ENCODE measurements at regions of chr12 and their contacts with region 1.

Region 1: DNA sequence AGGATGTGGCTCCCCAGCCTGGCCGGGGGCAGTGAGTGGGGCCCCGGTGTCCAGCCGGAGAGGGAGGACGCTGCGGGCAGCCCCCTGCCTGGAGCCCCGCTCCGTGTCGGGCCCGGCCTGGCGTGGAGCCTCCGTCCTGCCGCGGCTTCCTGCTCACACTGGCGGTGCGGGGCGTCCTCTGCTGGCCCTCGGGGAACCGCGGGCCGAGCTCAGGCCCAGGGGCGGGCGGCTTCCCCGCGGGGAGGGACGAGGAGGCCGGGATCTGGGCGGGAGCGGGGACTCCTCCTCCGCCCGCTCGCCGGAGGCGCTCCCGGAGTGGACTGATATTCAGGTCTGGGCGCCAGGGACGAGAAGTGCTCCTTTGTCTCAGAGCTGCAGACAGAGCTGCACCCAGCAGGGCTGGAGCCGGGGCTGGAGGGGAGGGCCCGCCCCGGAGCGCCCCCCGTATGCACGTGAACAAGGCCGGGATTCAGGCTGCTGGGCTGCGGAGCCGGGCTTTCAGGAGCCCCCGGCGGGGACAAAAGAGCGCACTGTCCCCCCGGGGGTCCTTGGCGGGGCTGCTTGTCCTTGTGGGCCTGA is 2.2 kb downstream of the MMP17 start:
- DNase-seq: peak; percentile 62
- ATAC-seq: peak; percentile 43
- H3K4me3 Mint-ChIP-seq: peak overlapping the region; percentile 65
- H3K27ac Mint-ChIP-seq: no peak overlapping the region
- H3K4me1 Mint-ChIP-seq: peaks cover 31% of the 10 kb centered on the region
- H3K27me3 Mint-ChIP-seq: peaks cover 9% of the 10 kb centered on the region
- CTCF ChIP-seq: no peak

Region 2: DNA sequence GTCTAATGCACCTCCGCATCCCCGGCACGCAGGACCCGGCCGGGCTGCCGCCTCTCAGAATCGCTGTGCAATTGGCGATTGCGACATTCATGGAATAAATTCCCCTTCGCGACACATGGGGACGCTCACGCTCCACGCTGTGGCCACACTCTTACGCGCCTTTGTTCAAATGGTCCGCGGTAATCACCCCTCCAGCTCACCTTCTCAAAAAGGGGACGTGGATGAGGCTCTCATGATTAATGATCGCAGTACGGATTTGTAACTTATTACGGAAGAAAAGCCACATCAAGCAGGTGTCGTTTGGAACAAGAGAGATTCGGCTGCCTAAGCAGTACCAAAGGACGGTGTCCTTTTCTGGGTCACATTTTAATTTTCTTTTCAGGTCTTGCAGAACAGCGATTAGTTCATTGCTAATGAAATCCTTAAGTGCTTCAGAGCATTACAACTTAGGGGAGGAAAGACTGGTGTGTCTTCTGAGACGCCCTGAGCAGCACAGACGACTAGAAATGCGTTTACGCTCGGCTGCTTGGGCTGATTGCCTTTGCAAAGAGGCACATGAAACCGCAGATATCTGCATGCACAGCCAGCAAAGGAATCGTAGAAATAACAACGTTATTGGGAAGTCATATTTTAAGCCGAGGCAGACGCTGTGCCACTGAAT is 914.0 kb before region 1 on chr12:
- CTCF ChIA-PET with region 1: interaction called, 5 read pairs
- POLR2A ChIA-PET with region 1: no interaction called
- intact Hi-C with region 1: loop called (anchors 1 kb)
- DNase-seq: peak; percentile 48
- ATAC-seq: peak; percentile 60
- H3K4me3 Mint-ChIP-seq: peak overlapping the region; percentile 39
- H3K27ac Mint-ChIP-seq: no peak overlapping the region
- H3K4me1 Mint-ChIP-seq: peaks cover 9% of the 10 kb centered on the region
- H3K27me3 Mint-ChIP-seq: peaks cover 35% of the 10 kb centered on the region
- CTCF ChIP-seq: peak; percentile 53

Region 3: DNA sequence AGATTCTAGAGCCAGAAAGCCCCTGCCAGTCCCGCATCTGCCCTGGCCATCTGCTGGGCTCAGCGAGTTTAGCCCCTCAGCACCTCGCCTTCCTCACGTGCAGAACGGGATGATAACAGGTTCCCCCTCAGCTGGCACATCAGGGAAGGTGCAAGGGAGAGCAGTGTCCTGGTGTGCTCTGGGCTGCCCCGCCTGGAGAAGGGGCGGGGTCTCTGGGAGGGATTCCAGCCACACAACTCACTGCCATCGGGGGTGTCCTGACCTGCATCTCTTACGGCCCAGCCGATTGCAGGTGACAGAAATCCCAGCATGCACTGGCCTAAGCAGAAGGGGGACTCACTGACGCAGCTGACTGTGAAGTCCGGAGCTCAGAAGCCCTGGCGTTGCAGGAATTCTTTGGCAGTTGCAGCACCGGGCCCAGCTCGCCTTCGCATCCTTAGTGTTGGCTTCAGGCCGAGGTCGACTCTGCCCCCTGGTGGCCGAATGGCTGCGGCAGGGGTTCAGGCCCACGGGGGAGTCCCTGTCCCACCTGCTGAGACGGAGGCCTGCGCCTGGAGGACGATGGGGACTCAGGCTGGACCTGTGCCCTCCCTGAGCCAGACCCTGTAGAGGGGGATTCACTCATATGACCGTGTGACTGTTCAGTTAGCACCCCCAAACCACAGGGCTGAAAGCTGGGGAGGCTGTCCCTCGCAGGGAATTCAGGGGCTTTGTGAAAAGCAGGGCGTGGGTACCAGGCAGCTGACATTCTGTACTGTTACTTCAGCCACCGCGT is 698.1 kb before region 1 on chr12:
- CTCF ChIA-PET with region 1: no interaction called
- POLR2A ChIA-PET with region 1: no interaction called
- intact Hi-C with region 1: loop called (anchors 10 kb)
- DNase-seq: peak; percentile 72
- ATAC-seq: peak; percentile 77
- H3K4me3 Mint-ChIP-seq: no peak overlapping the region
- H3K27ac Mint-ChIP-seq: no peak overlapping the region
- H3K4me1 Mint-ChIP-seq: no peaks in the 10 kb centered on the region
- H3K27me3 Mint-ChIP-seq: peaks cover 2% of the 10 kb centered on the region
- CTCF ChIP-seq: no peak

Region 4: GRCh38 chr12:131710464-131711457 is 119.7 kb before region 1 on chr12 and contains the start of gene SFSWAP:
- CTCF ChIA-PET with region 1: no interaction called
- POLR2A ChIA-PET with region 1: interaction called, 3 read pairs
- intact Hi-C with region 1: loop called (anchors 1 kb)
- DNase-seq: peak; percentile 79
- ATAC-seq: peak; percentile 95
- H3K4me3 Mint-ChIP-seq: peak within 1 kb of the TSS; percentile 93
- H3K27ac Mint-ChIP-seq: peak within 1 kb of the TSS; percentile 98
- H3K4me1 Mint-ChIP-seq: peaks cover 31% of the 10 kb centered on the region
- H3K27me3 Mint-ChIP-seq: no peaks in the 10 kb centered on the region
- CTCF ChIP-seq: no peak
- total RNA-seq, gene SFSWAP: 75.1 and 88.0 TPM in 2 replicates

Region 5: GRCh38 chr12:131773582-131774221 is 56.7 kb before region 1 on chr12:
- CTCF ChIA-PET with region 1: interaction called, 7 read pairs
- POLR2A ChIA-PET with region 1: interaction called, 3 read pairs
- intact Hi-C with region 1: loop called (anchors 2 kb)
- DNase-seq: peak; percentile 49
- ATAC-seq: peak; percentile 72
- H3K4me3 Mint-ChIP-seq: peak overlapping the region; percentile 84
- H3K27ac Mint-ChIP-seq: peak overlapping the region; percentile 98
- H3K4me1 Mint-ChIP-seq: peaks cover 76% of the 10 kb centered on the region
- H3K27me3 Mint-ChIP-seq: no peaks in the 10 kb centered on the region
- CTCF ChIP-seq: no peak

Region 6: GRCh38 chr12:131850856-131851559 is 20.6 kb after region 1 on chr12:
- CTCF ChIA-PET with region 1: no interaction called
- POLR2A ChIA-PET with region 1: no interaction called
- intact Hi-C with region 1: no loop called
- DNase-seq: peak; percentile 42
- ATAC-seq: peak; percentile 59
- H3K4me3 Mint-ChIP-seq: no peak overlapping the region
- H3K27ac Mint-ChIP-seq: no peak overlapping the region
- H3K4me1 Mint-ChIP-seq: peaks cover 16% of the 10 kb centered on the region
- H3K27me3 Mint-ChIP-seq: no peaks in the 10 kb centered on the region
- CTCF ChIP-seq: no peak

Region 7: DNA sequence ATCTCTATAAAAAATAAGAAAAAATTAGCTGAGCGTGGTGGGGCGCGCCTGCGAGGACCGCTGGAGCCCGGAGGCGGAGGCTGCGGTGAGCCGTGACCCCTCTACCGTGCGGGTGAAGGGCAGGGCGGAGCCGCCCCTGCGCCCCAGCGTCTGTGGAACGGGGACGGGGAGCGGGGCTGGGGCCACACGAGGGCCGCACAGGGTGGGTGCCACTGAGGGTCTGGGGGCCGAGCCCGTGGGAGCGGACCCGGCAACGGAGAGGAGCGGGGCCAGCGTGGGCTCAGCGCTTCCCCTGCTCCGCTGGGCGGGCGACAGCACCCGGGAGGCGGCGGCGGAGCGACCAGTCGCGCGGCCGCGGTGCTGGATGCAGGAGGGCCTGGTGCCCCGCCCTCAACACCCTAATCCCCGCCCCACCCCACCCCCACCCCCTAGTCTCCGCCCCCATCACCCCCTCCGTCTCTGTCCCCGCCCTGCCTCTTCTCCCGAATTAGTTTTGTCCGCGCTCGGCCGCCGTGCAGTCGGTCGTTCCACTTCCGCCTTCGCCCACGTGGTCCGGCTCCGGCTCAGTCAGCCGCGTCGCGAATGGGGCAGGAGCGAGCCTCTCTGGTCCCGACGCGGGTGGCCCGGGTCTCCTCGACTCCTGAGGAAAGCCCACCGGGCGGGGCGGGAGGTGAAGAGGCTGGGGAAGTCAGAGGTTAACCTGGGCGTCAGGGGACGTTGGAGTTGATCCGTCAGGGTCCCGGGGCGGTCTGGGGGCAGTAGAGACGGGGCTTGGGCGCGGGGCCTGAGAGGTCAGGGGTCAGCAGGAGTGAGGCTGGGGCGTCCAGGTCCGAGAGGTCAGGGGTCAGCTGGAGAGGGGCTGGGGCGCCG is 98.5 kb after region 1 on chr12 and contains the start of gene PUS1:
- CTCF ChIA-PET with region 1: no interaction called
- POLR2A ChIA-PET with region 1: no interaction called
- intact Hi-C with region 1: loop called (anchors 2 kb)
- DNase-seq: peak; percentile 88
- ATAC-seq: peak; percentile 82
- H3K4me3 Mint-ChIP-seq: peak within 1 kb of the TSS; percentile 94
- H3K27ac Mint-ChIP-seq: peak within 1 kb of the TSS; percentile 90
- H3K4me1 Mint-ChIP-seq: peaks cover 36% of the 10 kb centered on the region
- H3K27me3 Mint-ChIP-seq: no peaks in the 10 kb centered on the region
- CTCF ChIP-seq: no peak
- total RNA-seq, gene PUS1: 51.5 and 60.3 TPM in 2 replicates